Activated CD4-positive, alpha-beta T cell treated with anti-CD3 and anti-CD28 coated beads for 36 hours (primary cell): ENCODE measurements at regions of chr9 and their contacts with region 1.

Region 1: GRCh38 chr9:126398403-126399058 is 71.9 kb downstream of the MVB12B start:
- DNase-seq: peak; percentile 86
- ATAC-seq: peak; percentile 30
- H3K4me3 Mint-ChIP-seq: no peak overlapping the region
- H3K27ac Mint-ChIP-seq: no peak overlapping the region
- H3K4me1 Mint-ChIP-seq: peaks cover 48% of the 10 kb centered on the region
- H3K27me3 Mint-ChIP-seq: no peaks in the 10 kb centered on the region

Region 2: GRCh38 chr9:126301985-126302603 is 96.4 kb before region 1 on chr9:
- CTCF ChIA-PET with region 1: interaction called, 23 read pairs
- POLR2A ChIA-PET with region 1: no interaction called
- intact Hi-C with region 1: loop called (anchors 1 kb)
- DNase-seq: peak; percentile 69
- ATAC-seq: peak; percentile 65
- H3K4me3 Mint-ChIP-seq: no peak overlapping the region
- H3K27ac Mint-ChIP-seq: no peak overlapping the region
- H3K4me1 Mint-ChIP-seq: peaks cover 2% of the 10 kb centered on the region
- H3K27me3 Mint-ChIP-seq: no peaks in the 10 kb centered on the region

Region 3: GRCh38 chr9:126326228-126327005 is 72.1 kb before region 1 on chr9 and contains the start of gene MVB12B:
- CTCF ChIA-PET with region 1: interaction called, 33 read pairs
- POLR2A ChIA-PET with region 1: no interaction called
- intact Hi-C with region 1: loop called in 1 of 2 experiments (anchors 2 kb)
- DNase-seq: peak; percentile 68
- ATAC-seq: peak; percentile 75
- H3K4me3 Mint-ChIP-seq: peak within 1 kb of the TSS; percentile 63
- H3K27ac Mint-ChIP-seq: peak within 1 kb of the TSS; percentile 47
- H3K4me1 Mint-ChIP-seq: peaks cover 31% of the 10 kb centered on the region
- H3K27me3 Mint-ChIP-seq: peaks cover 2% of the 10 kb centered on the region
- total RNA-seq, gene MVB12B: 3.0 TPM

Region 4: GRCh38 chr9:126411225-126411947 is 12.9 kb after region 1 on chr9:
- CTCF ChIA-PET with region 1: interaction called, 9 read pairs
- POLR2A ChIA-PET with region 1: no interaction called
- intact Hi-C with region 1: loop called (anchors 1 to 2 kb)
- DNase-seq: peak; percentile 62
- ATAC-seq: peak; percentile 89
- H3K4me3 Mint-ChIP-seq: peak overlapping the region; percentile 54
- H3K27ac Mint-ChIP-seq: peak overlapping the region; percentile 72
- H3K4me1 Mint-ChIP-seq: peaks cover 35% of the 10 kb centered on the region
- H3K27me3 Mint-ChIP-seq: no peaks in the 10 kb centered on the region

Region 5: GRCh38 chr9:126471084-126471624 is 72.6 kb after region 1 on chr9:
- CTCF ChIA-PET with region 1: interaction called, 7 read pairs
- POLR2A ChIA-PET with region 1: no interaction called
- intact Hi-C with region 1: loop called (anchors 1 to 5 kb)
- DNase-seq: peak; percentile 89
- ATAC-seq: peak; percentile 92
- H3K4me3 Mint-ChIP-seq: peak overlapping the region; percentile 39
- H3K27ac Mint-ChIP-seq: no peak overlapping the region
- H3K4me1 Mint-ChIP-seq: peaks cover 60% of the 10 kb centered on the region
- H3K27me3 Mint-ChIP-seq: peaks cover 6% of the 10 kb centered on the region

Region 6: DNA sequence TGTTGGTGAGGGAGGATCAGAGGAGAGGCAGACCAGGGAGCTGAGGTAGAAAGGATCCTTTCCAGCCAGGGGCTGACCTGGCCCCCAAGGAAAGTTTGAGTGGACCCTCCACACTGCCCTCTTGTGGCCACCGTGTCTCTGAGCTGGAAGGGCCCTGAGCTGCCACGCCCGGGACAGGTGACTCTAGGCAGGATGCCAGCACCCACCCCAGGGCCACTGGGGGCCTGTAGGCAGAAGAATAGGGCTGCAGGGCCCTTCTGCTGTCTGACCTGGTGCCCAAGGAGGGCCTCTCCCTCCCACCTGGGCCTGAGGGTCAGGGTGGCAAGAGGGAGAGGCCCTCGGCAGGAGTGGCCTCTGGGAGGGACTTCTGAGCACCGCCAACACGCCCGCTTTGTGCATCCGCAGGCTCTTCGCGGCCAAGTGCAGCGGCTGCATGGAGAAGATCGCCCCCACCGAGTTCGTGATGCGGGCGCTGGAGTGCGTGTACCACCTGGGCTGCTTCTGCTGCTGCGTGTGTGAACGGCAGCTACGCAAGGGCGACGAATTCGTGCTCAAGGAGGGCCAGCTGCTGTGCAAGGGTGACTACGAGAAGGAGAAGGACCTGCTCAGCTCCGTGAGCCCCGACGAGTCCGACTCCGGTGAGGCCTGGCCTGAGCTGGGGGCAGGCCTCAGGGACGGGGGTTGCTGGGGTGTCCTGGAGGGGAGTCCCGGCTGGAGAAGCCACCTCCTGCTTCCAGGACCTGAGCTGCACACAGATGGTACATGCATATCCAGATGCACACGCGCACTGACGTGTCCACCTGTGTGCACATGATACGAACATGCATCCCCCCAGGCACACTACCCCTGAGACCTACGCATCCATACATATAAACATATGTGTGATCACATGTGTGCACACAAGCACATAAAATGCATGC is 292.2 kb after region 1 on chr9:
- CTCF ChIA-PET with region 1: no interaction called
- POLR2A ChIA-PET with region 1: no interaction called
- intact Hi-C with region 1: no loop called
- DNase-seq: peak; percentile 79
- ATAC-seq: peak; percentile 79
- H3K4me3 Mint-ChIP-seq: no peak overlapping the region
- H3K27ac Mint-ChIP-seq: no peak overlapping the region
- H3K4me1 Mint-ChIP-seq: no peaks in the 10 kb centered on the region
- H3K27me3 Mint-ChIP-seq: peaks cover 28% of the 10 kb centered on the region